ENCODE measurements at regions of chr21 and their contacts with region 1.

Region 1: DNA sequence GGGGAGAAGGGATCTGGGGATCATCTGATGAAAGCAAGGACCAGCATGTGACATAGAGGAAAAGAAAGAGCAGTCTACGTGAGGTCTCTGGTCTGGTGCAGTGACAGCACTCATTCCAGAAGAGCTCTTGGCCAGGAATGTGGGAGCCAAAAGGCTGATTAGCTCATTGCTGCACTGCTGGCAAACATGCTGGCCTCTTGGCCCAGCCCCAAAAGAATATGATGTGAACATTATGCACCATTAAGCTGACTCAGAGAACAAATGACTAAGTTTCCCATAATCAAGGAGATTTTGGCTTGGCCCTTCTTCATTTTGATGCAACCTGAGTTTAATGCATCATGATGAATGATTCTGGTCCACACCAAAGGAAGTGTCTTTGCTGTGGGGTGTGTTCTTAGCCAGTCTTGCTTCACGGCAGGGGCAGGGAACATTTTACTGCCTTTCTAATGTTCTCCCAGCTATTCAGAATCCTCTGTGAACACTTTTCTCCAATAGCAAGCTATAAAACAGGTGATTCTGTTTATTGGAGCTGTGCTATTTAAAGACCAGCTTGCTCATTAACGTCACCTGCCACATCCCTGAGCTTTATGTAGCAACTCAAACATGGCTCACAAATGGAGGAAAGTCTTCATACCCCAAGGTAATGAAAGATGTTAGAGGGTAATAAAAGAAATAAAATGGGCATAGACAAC is 55.1 kb downstream of the PCBP3 start:
- DNase-seq: no peak
- H3K4me3 ChIP-seq: no peak overlapping the region
- H3K27ac ChIP-seq: no peak overlapping the region
- H3K4me1 ChIP-seq: no peaks in the 10 kb centered on the region
- H3K27me3 ChIP-seq: peaks cover 0 to 1% of the 10 kb centered on the region in 2 donors
- CTCF ChIP-seq: no peak
- POLR2A ChIP-seq: no peak

Region 2: GRCh38 chr21:45709696-45710268 is 11.1 kb after region 1 on chr21:
- intact Hi-C with region 1: loop called (anchors 1 kb)
- DNase-seq: no peak
- H3K4me3 ChIP-seq: no peak overlapping the region
- H3K27ac ChIP-seq: no peak overlapping the region
- H3K4me1 ChIP-seq: no peaks in the 10 kb centered on the region
- H3K27me3 ChIP-seq: peaks cover 0 to 8% of the 10 kb centered on the region in 2 donors
- CTCF ChIP-seq: no peak
- POLR2A ChIP-seq: no peak

Region 3: DNA sequence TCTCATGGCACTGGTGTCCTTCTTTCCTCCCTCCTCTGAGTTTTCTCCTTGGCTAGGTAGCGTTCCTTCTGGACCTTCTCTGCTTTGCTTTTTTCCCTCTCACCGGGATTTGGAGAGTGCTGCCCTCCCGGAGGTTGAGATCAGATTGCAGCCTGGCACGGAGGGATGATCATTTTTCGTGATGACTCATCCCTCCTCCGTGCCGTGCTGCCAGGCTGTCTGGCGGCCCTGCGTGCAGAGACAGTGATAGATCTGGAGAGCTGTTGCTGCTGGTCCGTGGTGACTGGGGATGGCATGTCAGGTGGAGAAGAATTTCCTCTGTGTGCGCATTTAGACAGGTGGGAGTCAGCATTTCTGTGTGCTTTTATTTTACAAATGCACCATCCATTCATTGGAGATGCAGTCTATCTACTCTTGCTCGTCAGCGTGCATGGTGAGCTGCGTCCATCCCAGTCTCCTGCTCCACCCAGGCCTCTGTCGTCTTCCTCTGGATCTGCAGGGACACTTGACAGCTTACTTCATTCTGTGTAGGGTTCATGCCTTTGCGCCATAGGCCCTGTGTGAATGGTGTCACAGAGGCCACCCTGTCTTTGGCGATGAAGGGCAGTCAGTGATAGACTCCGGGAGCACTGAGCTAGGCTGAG is 49.3 kb after region 1 on chr21:
- intact Hi-C with region 1: no loop called
- DNase-seq: peak in 1 of 2 donors; percentile 50
- H3K4me3 ChIP-seq: no peak overlapping the region
- H3K27ac ChIP-seq: no peak overlapping the region
- H3K4me1 ChIP-seq: no peaks in the 10 kb centered on the region
- H3K27me3 ChIP-seq: peaks cover 0 to 8% of the 10 kb centered on the region in 2 donors
- CTCF ChIP-seq: no peak
- POLR2A ChIP-seq: no peak

Region 4: GRCh38 chr21:46393941-46394594 is 695.4 kb after region 1 on chr21:
- intact Hi-C with region 1: no loop called
- DNase-seq: no peak
- H3K4me3 ChIP-seq: no peak overlapping the region
- H3K27ac ChIP-seq: no peak overlapping the region
- H3K4me1 ChIP-seq: no peaks in the 10 kb centered on the region
- H3K27me3 ChIP-seq: no peaks in the 10 kb centered on the region
- CTCF ChIP-seq: no peak
- POLR2A ChIP-seq: no peak

Measured in breast epithelium (tissue), 4 donors.